ENCODE measurements at regions of chr19 and their contacts with region 1.

Region 1: DNA sequence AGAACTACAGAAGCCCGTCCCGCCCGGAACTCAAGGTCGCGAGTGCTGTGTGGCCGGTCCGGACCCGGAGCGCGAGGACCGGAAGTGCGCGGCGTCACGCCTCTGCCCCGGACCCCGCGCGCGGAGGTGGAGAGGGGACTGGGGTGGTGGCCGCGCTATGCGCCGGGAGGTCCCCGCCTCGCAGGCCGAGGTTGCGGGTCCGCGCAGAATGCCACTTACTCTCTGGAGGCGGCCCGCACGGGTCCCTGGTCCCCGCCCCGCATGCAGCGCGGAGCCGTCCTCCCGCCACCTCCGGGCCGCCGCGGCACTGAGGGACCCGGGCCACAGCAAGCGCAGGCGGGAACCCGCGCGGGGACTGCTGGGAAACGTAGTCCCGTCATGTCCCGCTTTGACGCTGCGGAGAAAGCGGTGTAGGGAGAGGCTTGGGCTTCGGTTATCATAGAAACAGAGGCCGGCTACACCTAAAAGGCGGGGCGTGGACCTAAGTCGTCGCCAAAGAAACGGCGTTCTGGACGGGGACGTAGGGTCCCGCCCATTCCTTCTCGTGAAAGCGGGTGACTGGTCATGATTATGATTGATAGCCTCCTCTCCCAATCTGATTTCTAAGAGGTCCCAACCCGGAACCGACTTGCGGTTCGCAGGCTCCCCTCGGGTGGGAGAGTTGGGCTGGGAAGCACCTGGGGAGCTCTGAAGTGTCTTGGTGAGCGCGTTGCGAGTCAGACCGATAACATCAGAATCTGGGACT is at the start of gene ZNF837:
- DNase-seq: peak; percentile 96
- ATAC-seq: peak; percentile 86
- H3K4me3 Mint-ChIP-seq: peak within 1 kb of the TSS; percentile 83
- H3K27ac Mint-ChIP-seq: peak within 1 kb of the TSS; percentile 87
- H3K4me1 Mint-ChIP-seq: peaks cover 37% of the 10 kb centered on the region
- H3K27me3 Mint-ChIP-seq: no peaks in the 10 kb centered on the region
- CTCF ChIP-seq: no peak
- total RNA-seq, gene ZNF837: 3.1 and 3.5 TPM in 2 replicates

Region 2: DNA sequence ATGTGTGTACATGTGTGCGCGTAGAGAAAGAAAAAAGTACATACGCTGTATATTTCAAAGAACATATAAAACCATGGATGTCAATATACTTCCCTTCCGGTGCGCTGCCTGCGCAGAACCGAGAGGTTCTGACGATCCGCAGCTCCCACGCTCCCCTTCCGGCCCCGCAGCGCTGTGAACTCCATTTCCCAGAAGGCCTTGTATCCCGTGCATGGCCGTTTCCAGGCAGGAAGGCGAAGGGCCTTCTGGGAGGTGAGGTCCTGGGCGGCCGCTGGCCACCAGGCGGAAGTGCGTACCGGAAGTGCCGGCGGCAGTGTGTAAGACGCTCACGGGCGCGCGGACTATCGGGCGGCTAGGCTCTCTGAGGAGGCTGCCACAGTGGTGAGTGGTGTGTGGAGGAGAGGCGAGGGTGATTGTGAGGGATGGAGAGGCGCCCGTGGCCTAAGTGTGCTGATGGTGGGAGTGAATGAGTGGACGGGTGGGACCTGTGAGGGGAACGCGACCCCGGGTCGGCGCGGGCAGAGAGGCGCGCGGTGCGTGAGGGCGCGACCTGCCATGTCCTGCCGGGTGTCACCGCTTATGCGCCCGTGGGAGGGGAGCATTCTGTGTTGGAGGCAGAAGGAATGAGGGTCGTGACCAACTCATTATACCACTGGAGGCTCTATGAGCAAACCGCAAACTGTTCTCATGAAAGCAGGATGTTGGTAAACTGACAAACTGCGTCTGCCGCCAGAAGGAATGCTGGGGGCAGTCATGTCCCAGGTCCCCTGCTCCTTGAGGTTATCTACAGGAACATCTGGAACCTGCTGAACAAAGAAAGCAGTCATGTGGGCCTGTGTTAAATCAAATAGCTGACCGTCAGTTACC is 75.6 kb before region 1 on chr19 and contains the start of gene ERVK3-1:
- CTCF ChIA-PET with region 1: no interaction called
- POLR2A ChIA-PET with region 1: interaction called, 3 read pairs
- intact Hi-C with region 1: loop called (anchors 1 kb)
- DNase-seq: peak; percentile 89
- ATAC-seq: peak; percentile 97
- H3K4me3 Mint-ChIP-seq: peak within 1 kb of the TSS; percentile 100
- H3K27ac Mint-ChIP-seq: peak within 1 kb of the TSS; percentile 98
- H3K4me1 Mint-ChIP-seq: peaks cover 38% of the 10 kb centered on the region
- H3K27me3 Mint-ChIP-seq: no peaks in the 10 kb centered on the region
- CTCF ChIP-seq: no peak
- total RNA-seq, gene ERVK3-1: 61.4 and 74.3 TPM in 2 replicates

Region 3: DNA sequence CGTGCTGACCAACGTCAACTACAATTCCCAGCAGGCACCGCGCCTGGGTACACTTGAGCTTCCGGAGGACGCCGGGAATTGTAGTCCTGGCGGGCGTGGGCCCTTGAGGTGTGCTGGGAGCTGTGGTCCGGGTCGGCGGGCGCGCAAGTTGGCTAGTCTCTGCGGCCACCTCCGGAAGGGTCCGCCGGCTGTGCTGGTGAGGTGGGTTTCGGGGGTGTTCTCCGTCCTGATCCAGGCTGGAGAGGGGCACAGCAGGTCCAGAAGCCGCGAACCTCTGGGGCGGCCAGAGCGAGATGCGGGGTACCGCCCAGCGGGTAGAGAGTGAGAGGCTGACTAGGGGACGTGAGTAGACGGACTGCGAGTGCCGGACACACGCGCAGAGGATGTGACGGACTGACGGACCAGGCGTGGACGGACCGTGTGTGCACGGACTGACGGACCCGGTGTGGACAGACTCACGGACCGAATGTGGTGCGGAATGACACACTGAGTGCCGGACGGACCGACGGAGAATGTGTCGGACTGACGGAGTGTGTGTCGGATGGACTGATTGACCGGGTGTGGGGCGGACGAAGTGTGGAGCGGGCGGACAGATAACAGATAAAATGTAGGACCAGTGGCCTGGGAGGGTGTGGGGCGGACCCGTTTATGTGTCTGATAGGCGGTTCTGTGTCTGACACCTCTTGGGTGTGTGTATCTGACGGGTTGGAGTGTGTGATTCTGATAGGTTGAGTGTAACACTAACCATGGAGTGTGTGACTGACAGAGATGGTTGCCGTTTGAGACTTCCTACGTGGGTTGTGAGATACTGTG is 53.8 kb before region 1 on chr19 and contains the start of gene ZSCAN22:
- CTCF ChIA-PET with region 1: no interaction called
- POLR2A ChIA-PET with region 1: interaction called, 11 read pairs
- intact Hi-C with region 1: loop called (anchors 1 kb)
- DNase-seq: peak; percentile 82
- ATAC-seq: peak; percentile 88
- H3K4me3 Mint-ChIP-seq: no peak within 1 kb of the TSS
- H3K27ac Mint-ChIP-seq: no peak within 1 kb of the TSS
- H3K4me1 Mint-ChIP-seq: peaks cover 2% of the 10 kb centered on the region
- H3K27me3 Mint-ChIP-seq: no peaks in the 10 kb centered on the region
- CTCF ChIP-seq: no peak
- total RNA-seq, gene ZSCAN22: 4.7 and 4.8 TPM in 2 replicates

Region 4: DNA sequence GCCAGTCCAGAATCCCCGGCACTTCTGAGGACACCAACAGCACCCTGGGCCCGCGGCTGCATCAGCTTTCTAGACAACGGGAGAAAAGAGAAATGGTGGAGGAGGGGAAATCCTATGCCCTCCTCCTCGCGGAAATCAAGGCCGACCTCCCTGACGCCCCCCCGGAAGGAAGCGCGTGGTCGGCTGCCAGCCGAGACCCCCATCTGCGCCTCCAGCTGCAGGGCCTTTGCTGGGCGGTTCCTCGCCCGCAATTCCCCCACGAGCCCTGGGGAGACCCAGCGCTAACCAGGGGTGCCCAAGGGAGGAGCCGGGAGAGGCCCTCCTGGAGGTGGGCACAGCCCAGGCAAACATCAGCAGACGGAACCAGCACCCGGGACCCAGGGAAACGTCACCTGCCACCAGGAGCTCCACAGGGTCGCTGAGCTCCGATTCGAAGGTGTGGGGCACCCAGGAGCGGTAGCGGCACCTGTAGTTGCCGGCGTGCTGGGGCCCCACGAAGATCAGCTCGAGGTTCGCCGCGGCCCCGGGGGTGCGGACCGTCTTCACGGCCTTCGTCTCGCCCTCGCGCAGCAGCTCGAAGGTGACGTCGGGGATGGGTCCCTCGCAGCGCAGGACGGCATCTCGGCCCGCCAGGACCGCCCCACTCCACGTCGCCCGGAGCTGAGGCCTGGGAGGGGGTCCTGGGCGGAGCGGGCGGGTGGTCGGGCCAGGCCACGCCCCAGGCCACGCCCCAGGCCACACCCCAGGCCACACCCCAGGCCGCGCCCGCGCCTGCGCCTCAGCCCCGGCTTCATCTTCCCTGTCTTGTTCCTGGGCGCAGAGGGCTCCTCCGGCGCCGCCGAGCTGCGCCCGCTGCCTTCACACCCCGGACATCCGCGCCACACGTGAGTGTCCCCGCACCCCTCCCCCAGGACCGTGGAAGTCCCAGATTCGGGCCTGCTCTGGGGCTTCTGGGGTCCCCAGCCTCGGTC is 33.6 kb before region 1 on chr19:
- CTCF ChIA-PET with region 1: no interaction called
- POLR2A ChIA-PET with region 1: interaction called, 8 read pairs
- intact Hi-C with region 1: loop called (anchors 1 kb)
- DNase-seq: peak; percentile 84
- ATAC-seq: peak; percentile 93
- H3K4me3 Mint-ChIP-seq: peak overlapping the region; percentile 93
- H3K27ac Mint-ChIP-seq: peak overlapping the region; percentile 76
- H3K4me1 Mint-ChIP-seq: peaks cover 30% of the 10 kb centered on the region
- H3K27me3 Mint-ChIP-seq: no peaks in the 10 kb centered on the region
- CTCF ChIP-seq: no peak

Region 5: GRCh38 chr19:58451358-58452101 is 70.6 kb after region 1 on chr19 and contains the start of gene ZNF324B:
- CTCF ChIA-PET with region 1: no interaction called
- POLR2A ChIA-PET with region 1: no interaction called
- intact Hi-C with region 1: loop called (anchors 2 kb)
- DNase-seq: peak; percentile 94
- ATAC-seq: peak; percentile 98
- H3K4me3 Mint-ChIP-seq: peak within 1 kb of the TSS; percentile 86
- H3K27ac Mint-ChIP-seq: peak within 1 kb of the TSS; percentile 79
- H3K4me1 Mint-ChIP-seq: peaks cover 16% of the 10 kb centered on the region
- H3K27me3 Mint-ChIP-seq: peaks cover 15% of the 10 kb centered on the region
- CTCF ChIP-seq: no peak
- total RNA-seq, gene ZNF324B: 11.1 and 11.7 TPM in 2 replicates

Region 6: DNA sequence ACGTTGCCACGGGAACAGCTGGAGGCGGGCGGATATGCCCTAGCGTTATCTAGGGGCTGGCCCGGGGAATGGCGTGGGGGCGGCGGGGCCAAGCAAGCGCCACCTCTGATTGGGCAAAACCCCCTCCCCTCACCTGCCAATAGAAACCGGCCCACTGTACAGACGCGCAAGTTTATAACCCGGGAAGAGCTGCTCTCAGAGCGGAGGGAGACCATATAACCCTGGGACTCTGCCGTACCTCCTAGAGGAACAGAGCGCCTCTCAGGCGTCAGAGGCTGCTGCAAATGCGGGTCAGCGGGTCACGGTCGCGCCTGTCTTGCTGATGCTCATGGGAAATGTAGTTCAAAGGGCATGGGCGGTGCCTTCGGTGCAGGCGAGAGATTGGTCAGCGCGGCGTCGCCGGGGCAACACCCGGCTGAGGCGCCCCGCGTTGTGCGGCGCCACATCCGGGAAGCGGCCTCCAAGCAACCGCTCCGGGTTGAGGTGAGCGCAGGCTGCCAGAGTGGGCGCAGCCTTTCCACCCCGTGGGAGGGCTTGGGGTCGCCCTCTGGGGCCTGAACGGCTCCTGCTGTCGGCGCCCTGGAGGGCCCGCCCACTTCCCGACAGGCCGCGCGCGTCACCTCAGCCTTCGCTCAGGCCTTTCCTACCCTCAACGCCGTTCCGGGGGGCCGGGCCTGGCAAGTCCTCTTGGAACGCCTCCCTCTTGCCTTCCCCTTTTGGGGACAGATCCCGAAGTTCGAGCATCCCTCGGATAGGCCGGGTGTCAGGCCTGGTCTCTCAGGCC is 95.0 kb after region 1 on chr19 and contains the start of gene ZNF446:
- CTCF ChIA-PET with region 1: no interaction called
- POLR2A ChIA-PET with region 1: no interaction called
- intact Hi-C with region 1: loop called (anchors 2 kb)
- DNase-seq: peak; percentile 91
- ATAC-seq: peak; percentile 88
- H3K4me3 Mint-ChIP-seq: peak within 1 kb of the TSS; percentile 94
- H3K27ac Mint-ChIP-seq: peak within 1 kb of the TSS; percentile 95
- H3K4me1 Mint-ChIP-seq: peaks cover 20% of the 10 kb centered on the region
- H3K27me3 Mint-ChIP-seq: no peaks in the 10 kb centered on the region
- CTCF ChIP-seq: no peak
- total RNA-seq, gene ZNF446: 9.6 and 10.4 TPM in 2 replicates

Region 7: GRCh38 chr19:58572818-58573657 is 192.1 kb after region 1 on chr19 and contains the start of gene MZF1:
- CTCF ChIA-PET with region 1: no interaction called
- POLR2A ChIA-PET with region 1: interaction called, 3 read pairs
- intact Hi-C with region 1: loop called (anchors 1 kb)
- DNase-seq: peak; percentile 100
- ATAC-seq: peak; percentile 61
- H3K4me3 Mint-ChIP-seq: peak within 1 kb of the TSS; percentile 97
- H3K27ac Mint-ChIP-seq: peak within 1 kb of the TSS; percentile 100
- H3K4me1 Mint-ChIP-seq: peaks cover 44% of the 10 kb centered on the region
- H3K27me3 Mint-ChIP-seq: no peaks in the 10 kb centered on the region
- CTCF ChIP-seq: no peak
- total RNA-seq, gene MZF1: 41.9 and 54.5 TPM in 2 replicates

Measured in activated B cell treated with CpG ODN at 0.5 μM for 24 hours (primary cell).